Posterior cingulate gyrus (tissue), 11 donors: ENCODE measurements at regions of chr1 and their contacts with region 1.

Region 1: DNA sequence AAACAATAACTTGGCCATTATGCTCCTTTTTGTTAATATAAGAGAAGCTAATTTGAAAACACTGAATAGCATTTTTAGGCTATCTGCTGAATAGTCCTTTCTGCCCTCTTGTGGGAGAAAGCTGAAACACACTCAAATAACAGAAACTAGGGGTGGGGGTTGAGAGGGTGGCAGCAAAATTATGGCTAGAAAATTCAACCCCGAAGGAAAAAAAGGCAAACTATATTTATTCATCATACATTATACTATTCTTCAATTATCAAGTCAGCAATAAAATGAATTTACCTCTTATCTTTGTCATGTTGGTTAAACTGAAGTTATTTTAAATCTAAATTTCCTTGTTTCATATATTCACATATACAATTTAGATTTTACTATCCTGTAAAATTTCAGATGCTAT is 255.9 kb downstream of the FAF1 start:
- DNase-seq: peak in 1 of 10 donors; percentile 17

Region 2: DNA sequence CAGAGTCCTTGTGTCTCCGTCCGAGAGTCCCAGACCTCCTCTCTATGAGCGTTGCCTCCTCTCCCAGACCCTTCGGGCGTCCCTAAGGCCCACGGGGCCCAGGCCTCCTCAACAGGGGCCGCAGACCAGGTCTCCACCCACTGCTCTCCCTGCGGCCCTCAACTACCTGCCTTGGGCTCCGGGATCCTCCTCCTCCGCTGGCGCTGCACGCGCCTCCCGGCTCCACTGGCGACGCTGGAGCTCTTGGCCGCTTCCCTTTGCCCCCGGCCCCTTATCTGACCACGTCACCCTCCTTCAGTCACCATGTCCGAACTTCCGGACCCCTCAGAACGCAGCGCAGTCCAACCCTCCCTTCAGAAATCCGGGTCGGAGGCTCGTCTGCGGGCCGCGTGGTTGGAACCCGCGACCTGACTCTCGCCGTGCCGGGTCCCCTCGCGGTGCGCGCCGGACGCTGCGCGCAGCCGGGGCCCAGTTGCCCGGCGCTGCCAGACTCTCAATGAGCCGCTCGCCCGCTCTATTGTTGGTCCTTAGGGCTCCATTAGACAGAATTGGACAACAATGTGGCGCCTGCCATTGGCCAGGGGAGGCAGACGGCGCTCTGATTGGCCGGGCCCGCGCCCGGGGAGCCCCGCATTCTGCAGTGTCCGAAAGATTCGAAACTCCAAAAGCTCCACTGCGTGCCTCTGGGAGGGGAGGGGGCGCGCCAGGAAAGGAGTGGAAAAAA is 281.0 kb before region 1 on chr1 and contains the start of gene DMRTA2:
- intact Hi-C with region 1: loop called (anchors 10 kb)
- DNase-seq: peak in 5 of 10 donors; percentile 11 to 90 (median 67)

Region 3: GRCh38 chr1:50582346-50582745 is 121.8 kb before region 1 on chr1:
- intact Hi-C with region 1: no loop called
- DNase-seq: no peak